Cardiac septum (tissue), 1 donor: ENCODE measurements at regions of chr9 and their contacts with region 1.

Region 1: DNA sequence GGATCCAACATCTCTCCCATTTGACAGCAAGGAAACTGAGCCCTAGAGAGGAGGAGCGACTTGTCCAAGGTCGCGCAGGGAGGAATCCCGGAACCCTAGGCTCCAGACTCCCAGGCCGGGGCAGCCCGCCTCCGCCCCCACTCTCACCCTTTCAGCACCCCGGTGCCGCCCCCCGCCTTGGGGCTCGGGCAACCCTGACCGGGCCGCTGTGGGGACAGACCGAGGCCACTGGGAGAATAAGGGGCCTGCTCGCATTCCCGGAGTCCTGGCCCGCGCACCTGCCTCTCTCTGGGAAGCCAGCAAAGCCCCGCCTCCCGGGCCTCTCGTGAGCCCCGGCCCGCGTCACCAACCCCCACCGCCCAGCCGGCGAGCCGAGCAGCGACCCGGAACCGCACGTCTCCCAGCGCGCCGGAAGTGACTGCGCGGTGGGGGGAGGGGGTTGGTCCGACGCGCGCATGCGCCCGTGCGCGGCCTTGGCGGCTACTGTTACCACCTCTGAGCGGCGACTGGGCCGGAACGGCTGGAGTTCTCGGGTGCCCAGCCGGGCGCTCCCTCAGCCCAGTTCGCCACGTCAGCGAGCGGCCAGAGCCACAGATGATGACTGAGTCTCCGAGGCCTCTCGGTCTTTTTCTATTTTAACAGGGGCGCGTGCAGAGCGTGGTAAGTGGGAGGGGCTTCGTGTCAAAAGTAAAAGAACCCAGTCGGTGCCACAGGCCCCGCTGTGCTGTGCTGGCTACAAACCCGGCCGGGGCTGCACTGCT is at the start of gene GOLGA1:
- DNase-seq: peak; percentile 98
- total RNA-seq, gene GOLGA1: 22.1 TPM

Region 2: DNA sequence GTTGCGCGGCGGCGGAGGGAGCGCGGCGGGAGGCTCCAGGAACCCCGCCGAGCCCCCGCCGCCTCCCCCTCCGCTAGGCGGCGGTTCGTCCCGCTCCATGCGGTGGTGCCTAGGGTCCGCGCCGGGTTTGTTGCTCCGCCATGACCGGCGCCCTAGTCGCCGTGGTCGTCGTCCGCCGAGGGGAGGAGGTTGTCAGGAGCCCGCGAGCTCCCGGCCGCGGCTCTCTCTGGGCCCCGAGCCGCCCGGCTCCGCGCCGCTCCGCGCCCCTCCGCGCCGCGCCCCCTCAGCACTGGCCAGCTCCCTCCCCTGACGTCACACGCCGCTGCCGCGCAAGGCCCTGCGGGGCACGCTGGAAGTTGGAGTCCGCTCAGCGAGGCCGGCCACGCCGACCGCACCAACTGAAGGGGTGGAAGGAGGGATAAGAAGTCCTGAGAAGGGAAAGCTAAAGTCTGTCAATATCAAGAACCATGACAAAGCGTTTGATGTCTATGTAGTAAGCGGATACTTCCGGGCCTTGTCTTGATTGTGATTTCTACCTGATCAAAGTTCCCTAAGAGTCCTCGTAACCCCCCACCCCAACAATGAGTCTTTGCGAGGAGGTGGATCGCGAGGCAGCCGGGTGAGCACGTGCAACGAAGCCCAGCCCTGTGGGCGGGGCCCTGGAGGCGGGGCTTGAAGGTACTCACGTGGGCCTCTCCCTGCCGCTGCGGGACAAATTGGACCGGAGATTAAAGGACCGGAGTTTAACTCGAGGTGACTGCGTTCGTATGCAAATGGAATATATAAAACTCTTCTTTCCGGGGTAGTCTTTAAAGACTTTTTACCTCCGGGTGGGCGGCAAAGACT is 169.6 kb before region 1 on chr9 and contains the start of gene NR6A1:
- intact Hi-C with region 1: loop called (anchors 2 kb)
- DNase-seq: peak; percentile 98
- total RNA-seq, gene NR6A1: 2.2 TPM

Region 3: DNA sequence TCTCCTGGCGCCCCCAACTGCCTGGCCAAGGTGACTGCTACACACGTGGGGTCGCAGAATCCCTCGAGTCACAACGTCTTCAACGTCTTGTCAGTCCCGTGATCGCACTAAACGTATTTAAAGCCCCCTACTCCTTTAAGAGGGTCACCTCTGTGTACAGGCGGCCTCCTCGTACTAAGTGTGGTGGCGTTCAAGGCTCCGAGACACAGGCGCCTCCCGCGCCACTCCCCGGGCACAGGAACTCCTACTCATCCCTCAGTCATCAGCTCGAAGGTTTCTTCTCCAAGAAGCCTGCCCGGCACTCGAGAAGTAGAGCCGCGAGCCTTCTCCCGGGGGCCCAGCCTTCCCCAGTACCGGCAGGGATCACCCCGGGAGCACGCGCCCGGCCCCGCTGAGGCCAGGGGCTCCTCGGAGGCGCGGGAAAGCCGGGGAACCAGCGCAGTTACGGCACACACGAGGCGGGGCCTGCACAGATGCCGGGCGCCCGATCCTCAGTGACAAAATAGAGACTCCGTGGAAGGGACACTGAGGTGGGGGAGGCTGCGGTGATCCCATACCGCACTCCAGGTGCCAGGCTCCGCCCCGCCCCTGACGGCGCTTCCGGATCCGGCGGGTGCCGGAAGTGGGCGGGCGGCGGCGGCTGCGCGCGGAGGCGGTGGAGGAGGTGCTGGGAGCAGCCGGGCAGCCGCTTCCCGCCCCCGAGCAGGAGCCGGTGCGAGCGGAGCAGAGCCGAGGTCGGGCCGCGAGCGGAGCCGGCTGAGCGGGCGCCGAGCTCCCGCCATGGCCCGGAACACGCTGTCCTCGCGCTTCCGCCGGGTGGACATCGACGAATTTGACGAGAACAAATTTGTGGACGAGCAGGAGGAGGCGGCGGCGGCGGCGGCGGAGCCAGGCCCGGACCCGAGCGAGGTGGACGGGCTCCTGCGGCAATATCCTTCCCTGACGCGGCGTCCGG is 72.1 kb before region 1 on chr9:
- intact Hi-C with region 1: loop called (anchors 2 kb)
- DNase-seq: peak; percentile 95

Region 4: GRCh38 chr9:125143375-125144090 is 202.7 kb after region 1 on chr9 and contains the start of gene SCAI:
- intact Hi-C with region 1: loop called (anchors 2 kb)
- DNase-seq: peak; percentile 100
- total RNA-seq, gene SCAI: 4.8 TPM

Region 5: DNA sequence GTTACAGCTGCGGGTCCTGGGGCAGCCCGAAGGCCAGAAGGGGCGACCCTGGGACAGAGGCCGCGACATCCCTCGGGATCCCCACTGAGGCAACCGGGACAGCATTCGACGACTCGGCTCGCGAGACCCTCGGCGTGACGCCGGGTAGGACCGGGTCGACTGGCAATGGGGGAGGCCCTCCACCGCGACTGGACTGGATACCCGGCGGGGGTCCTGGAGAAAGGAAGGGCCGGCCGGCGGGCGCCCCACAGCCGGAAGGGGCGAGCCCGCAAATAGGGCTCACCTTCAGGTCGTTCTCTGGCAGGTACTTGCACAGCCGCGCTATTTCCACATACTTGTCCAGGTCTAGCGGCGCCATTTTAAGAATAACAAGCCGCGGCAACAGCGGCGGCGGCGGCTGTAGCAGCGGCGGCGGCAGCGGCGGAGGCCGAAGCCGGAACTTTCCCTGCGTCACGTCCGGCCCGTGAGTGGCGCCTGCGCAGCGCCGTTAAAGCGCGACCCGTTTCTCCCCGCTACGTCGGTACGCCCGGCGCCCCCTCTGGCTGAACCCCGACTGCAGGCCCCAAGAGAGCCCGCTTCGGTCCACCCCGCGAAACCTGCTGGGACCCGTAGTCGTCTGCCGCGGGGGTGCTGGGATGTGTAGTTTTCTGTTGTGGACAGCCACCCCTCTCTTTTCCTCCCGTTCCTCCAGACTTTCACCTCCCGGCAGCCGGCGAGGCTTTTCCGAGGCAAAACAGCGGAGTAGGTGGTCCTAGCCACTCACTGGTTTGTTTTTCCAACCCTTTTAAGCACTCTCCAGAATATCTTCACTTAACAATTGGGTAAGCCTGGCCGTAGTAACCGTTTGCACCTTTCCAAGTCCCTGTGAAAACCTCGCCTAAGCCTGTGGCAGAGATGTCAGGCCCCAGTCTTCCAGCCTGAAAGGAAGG is 248.8 kb after region 1 on chr9 and contains the start of gene PPP6C:
- intact Hi-C with region 1: loop called (anchors 2 kb)
- DNase-seq: peak; percentile 98
- total RNA-seq, gene PPP6C: 32.5 TPM

Region 6: GRCh38 chr9:125241000-125241862 is 300.4 kb after region 1 on chr9 and contains the start of gene HSPA5:
- intact Hi-C with region 1: loop called (anchors 5 kb)
- DNase-seq: peak; percentile 99
- total RNA-seq, gene HSPA5: 284 TPM